Psoas muscle (tissue), 8 donors: ENCODE measurements at regions of chr1 and their contacts with region 1.

Region 1: DNA sequence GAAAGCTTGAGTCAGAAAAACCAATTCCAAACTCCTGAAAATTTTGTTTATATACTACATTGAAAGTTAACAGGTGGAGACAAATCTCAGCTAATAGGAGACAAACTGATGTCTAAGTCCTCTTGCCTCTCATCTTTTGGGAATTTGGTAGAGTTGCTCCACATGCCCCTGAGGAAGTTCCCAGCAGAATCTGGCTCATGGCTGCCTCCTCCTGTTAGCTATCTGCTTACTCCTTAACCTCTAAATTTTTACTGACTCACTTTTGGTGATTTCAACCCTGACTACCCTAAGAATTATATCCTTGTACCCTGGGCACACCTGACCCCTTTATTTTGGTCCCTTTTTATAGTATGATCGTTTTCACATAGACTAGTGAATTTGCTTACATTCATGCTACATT is 633.7 kb upstream of the USP24 start:
- DNase-seq: no peak
- ATAC-seq: no peak
- H3K4me3 ChIP-seq: no peak overlapping the region
- H3K27ac ChIP-seq: no peak overlapping the region
- H3K4me1 ChIP-seq: peaks cover 11% of the 10 kb centered on the region
- H3K27me3 ChIP-seq: no peaks in the 10 kb centered on the region
- CTCF ChIP-seq: no peak

Region 2: GRCh38 chr1:55860798-55861519 is 12.1 kb after region 1 on chr1:
- intact Hi-C with region 1: loop called in 1 of 2 experiments (anchors 1 kb)
- DNase-seq: no peak
- ATAC-seq: no peak
- H3K4me3 ChIP-seq: no peak overlapping the region
- H3K27ac ChIP-seq: no peak overlapping the region
- H3K4me1 ChIP-seq: peaks cover 2% of the 10 kb centered on the region
- H3K27me3 ChIP-seq: no peaks in the 10 kb centered on the region
- CTCF ChIP-seq: no peak

Region 3: GRCh38 chr1:55877437-55878232 is 28.7 kb after region 1 on chr1:
- intact Hi-C with region 1: no loop called
- DNase-seq: no peak
- ATAC-seq: peak; percentile 56 to 80 (median 74)
- H3K4me3 ChIP-seq: no peak overlapping the region
- H3K27ac ChIP-seq: peak overlapping the region; percentile 78
- H3K4me1 ChIP-seq: peaks cover 17% of the 10 kb centered on the region
- H3K27me3 ChIP-seq: no peaks in the 10 kb centered on the region
- CTCF ChIP-seq: no peak